ENCODE measurements at regions of chr5 and their contacts with region 1.

Region 1: DNA sequence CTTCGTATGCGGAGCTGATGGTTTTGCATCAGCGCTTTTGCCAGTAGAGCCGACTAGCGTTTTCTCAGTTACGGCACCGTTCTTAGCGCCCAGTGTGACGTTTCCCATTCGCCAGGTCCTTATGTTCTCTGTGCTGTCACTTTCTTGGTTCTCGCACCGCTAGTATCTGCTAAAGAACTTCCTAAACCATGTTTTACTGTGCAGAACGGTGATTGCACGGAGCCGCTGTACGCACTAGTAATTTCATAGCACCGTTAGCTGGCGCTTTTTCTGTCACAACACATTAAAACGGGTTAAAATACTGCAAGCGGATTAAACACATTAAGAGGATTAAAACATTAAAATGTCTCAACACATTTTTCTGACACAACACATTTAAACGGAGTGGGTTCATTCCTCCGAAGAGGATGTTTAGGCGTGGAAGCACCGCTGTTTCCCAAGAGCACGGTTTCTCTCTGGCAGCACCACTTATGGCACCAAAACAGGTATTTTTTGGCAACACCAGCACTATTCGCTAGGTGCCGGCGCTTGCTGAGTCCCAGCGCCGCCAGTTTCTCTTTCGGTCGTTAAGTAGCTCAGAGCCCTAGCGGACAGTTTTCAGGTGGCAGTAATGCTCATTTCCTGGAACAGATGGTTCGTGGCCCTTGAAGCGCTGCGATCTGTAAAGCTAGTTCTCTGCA is 20.4 kb downstream of the ANXA2R start:
- DNase-seq: peak; percentile 92
- H3K4me3 Mint-ChIP-seq: peak overlapping the region; percentile 95
- H3K27ac Mint-ChIP-seq: peak overlapping the region; percentile 100
- H3K4me1 Mint-ChIP-seq: peaks cover 40% of the 10 kb centered on the region
- H3K27me3 Mint-ChIP-seq: no peaks in the 10 kb centered on the region

Region 2: GRCh38 chr5:42950440-42951292 is 69.1 kb before region 1 on chr5:
- CTCF ChIA-PET with region 1: interaction called, 12 read pairs
- DNase-seq: peak; percentile 70
- H3K4me3 Mint-ChIP-seq: peak overlapping the region; percentile 96
- H3K27ac Mint-ChIP-seq: peak overlapping the region; percentile 100
- H3K4me1 Mint-ChIP-seq: peaks cover 47% of the 10 kb centered on the region
- H3K27me3 Mint-ChIP-seq: peaks cover 9% of the 10 kb centered on the region

Region 3: GRCh38 chr5:43008369-43009153 is 11.2 kb before region 1 on chr5:
- CTCF ChIA-PET with region 1: interaction called, 50 read pairs
- DNase-seq: peak; percentile 94
- H3K4me3 Mint-ChIP-seq: peak overlapping the region; percentile 77
- H3K27ac Mint-ChIP-seq: peak overlapping the region; percentile 99
- H3K4me1 Mint-ChIP-seq: peaks cover 36% of the 10 kb centered on the region
- H3K27me3 Mint-ChIP-seq: no peaks in the 10 kb centered on the region

Region 4: DNA sequence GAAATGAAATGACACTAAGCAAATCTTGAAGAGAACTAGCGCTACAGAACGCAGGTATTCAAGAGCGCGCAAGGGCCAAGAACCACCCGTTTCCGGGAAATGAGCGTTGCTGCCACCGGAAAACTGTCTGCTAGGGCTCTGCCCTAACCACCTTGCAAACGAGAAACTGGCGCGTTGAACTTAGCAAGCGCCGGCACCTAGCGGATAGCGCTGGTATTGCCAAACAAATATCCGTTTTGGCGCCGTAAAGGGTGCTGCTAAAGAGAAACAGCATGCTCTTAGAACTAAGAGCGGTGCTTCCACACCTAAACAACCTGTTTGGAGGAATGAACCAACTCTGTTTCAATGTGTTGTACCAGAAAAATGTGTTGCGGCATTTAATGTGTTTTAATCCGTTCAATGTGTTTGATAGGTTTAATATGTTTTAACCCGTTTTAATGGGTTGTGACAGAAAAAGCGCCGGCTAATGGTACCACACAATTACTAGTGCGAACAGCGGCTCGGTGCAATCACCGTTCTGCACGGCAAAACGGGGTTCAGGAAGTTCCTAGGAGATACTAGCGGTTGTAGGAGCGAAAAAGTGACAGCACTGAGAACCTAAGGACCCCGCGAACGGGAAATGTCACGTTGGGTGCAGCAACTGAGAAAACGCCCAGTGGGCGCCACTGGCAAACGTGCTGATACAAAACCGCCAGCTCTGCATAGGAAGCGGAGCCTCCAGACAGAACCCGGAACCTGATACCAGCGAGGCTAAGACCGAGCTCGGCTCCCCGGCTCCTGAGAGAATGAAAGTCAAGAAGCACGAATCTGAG is 20.7 kb after region 1 on chr5 and contains the start of gene ANXA2R:
- CTCF ChIA-PET with region 1: interaction called, 47 read pairs
- DNase-seq: peak; percentile 97
- H3K4me3 Mint-ChIP-seq: peak within 1 kb of the TSS; percentile 94
- H3K27ac Mint-ChIP-seq: peak within 1 kb of the TSS; percentile 99
- H3K4me1 Mint-ChIP-seq: peaks cover 45% of the 10 kb centered on the region
- H3K27me3 Mint-ChIP-seq: peaks cover 4% of the 10 kb centered on the region

Measured in activated naive CD4-positive, alpha-beta T cell treated with anti-CD3 and anti-CD28 coated beads, Interleukin-2, amount 10 ng/mL, durations not matched to agents 7 days and 5 days (primary cell).